Adrenal gland (tissue), 19 donors: ENCODE measurements at regions of chr3 and their contacts with region 1.

Region 1: GRCh38 chr3:149352556-149352955 is 19.1 kb upstream of the TM4SF18 start:
- DNase-seq: peak; percentile 26 to 69 (median 49)
- H3K4me3 ChIP-seq: no peak overlapping the region
- H3K27ac ChIP-seq: no peak overlapping the region
- H3K4me1 ChIP-seq: no peaks in the 10 kb centered on the region
- H3K27me3 ChIP-seq: no peaks in the 10 kb centered on the region
- CTCF ChIP-seq: peak; percentile 30 to 64 (median 58)
- POLR2A ChIP-seq: no peak

Region 2: GRCh38 chr3:149216193-149216869 is 136.2 kb before region 1 on chr3:
- intact Hi-C with region 1: no loop called
- DNase-seq: peak in 3 of 7 donors; percentile 14 to 31 (median 21)
- H3K4me3 ChIP-seq: no peak overlapping the region
- H3K27ac ChIP-seq: peak overlapping the region in 2 of 5 donors; percentile 23 to 46
- H3K4me1 ChIP-seq: peaks cover 0 to 11% of the 10 kb centered on the region in 2 donors
- H3K27me3 ChIP-seq: no peaks in the 10 kb centered on the region
- CTCF ChIP-seq: no peak
- POLR2A ChIP-seq: no peak

Region 3: GRCh38 chr3:149280671-149281349 is 71.7 kb before region 1 on chr3:
- intact Hi-C with region 1: loop called in 1 of 2 experiments (anchors 10 kb)
- DNase-seq: no peak
- H3K4me3 ChIP-seq: no peak overlapping the region
- H3K27ac ChIP-seq: no peak overlapping the region
- H3K4me1 ChIP-seq: no peaks in the 10 kb centered on the region
- H3K27me3 ChIP-seq: no peaks in the 10 kb centered on the region
- CTCF ChIP-seq: no peak
- POLR2A ChIP-seq: no peak